ENCODE measurements at regions of chr15 and their contacts with region 1.

Region 1: GRCh38 chr15:93982226-93982727 is 249.1 kb upstream of the MCTP2 start:
- DNase-seq: peak; percentile 14 to 60
- ATAC-seq: peak; percentile 69 to 80
- H3K4me3 ChIP-seq: no peak overlapping the region
- H3K27ac ChIP-seq: peak overlapping the region; percentile 52 to 73 (median 54)
- H3K4me1 ChIP-seq: peaks cover 6 to 11% of the 10 kb centered on the region in 2 donors
- H3K27me3 ChIP-seq: no peaks in the 10 kb centered on the region
- CTCF ChIP-seq: no peak
- POLR2A ChIP-seq: no peak

Region 2: GRCh38 chr15:93823971-93824913 is 158.0 kb before region 1 on chr15:
- in situ Hi-C with region 1: no loop called
- intact Hi-C with region 1: no loop called
- DNase-seq: peak in 1 of 2 donors; percentile 17
- ATAC-seq: no peak
- H3K4me3 ChIP-seq: no peak overlapping the region
- H3K27ac ChIP-seq: no peak overlapping the region
- H3K4me1 ChIP-seq: no peaks in the 10 kb centered on the region
- H3K27me3 ChIP-seq: no peaks in the 10 kb centered on the region
- CTCF ChIP-seq: no peak
- POLR2A ChIP-seq: no peak

Region 3: DNA sequence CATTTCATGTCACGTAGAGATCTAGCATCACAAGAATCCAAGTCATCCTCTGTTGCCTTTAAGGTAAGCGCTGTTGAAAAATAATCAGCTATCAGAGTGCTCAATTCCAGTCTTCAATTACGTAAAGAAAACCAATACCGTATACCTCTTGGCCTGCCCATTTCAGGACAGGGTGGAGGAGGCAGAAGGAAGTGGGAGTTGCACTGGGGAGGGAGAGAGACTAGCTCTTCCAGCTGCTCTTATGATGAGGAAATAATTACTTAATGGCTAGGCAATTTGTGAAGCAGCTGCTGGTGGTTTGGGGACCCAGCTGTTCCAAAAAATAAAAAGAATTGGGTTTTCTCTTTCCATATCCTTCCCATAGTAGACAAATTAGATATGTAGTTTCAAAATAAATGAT is 116.7 kb before region 1 on chr15:
- in situ Hi-C with region 1: no loop called
- intact Hi-C with region 1: no loop called
- DNase-seq: peak in 1 of 2 donors; percentile 16
- ATAC-seq: peak; percentile 56 to 74
- H3K4me3 ChIP-seq: no peak overlapping the region
- H3K27ac ChIP-seq: peak overlapping the region in 3 of 4 donors; percentile 22 to 44 (median 39)
- H3K4me1 ChIP-seq: no peaks in the 10 kb centered on the region
- H3K27me3 ChIP-seq: no peaks in the 10 kb centered on the region
- CTCF ChIP-seq: no peak
- POLR2A ChIP-seq: no peak

Region 4: DNA sequence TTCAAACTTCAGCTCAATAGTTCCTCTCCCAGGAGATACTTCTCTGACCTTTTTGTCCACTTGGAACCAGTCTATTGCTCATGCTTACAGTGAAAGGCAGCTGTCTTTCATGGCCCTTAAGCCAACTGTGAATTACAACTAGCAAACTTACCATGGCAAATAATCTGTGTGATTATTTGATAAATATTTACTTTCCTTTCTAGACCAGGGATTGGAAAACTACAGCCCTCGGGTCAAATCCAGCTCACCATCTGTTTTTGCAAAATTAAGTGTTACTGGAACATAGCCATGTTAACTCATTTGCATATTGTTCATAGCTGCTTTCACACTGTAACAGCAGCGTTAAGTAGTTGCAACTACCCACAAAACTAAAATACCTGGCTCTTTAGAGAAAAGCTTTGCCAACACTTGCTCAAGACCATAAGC is 40.0 kb before region 1 on chr15:
- in situ Hi-C with region 1: no loop called
- intact Hi-C with region 1: loop called (anchors 5 kb)
- DNase-seq: no peak
- ATAC-seq: peak; percentile 52 to 53
- H3K4me3 ChIP-seq: no peak overlapping the region
- H3K27ac ChIP-seq: peak overlapping the region; percentile 6 to 50 (median 30)
- H3K4me1 ChIP-seq: peaks cover 0 to 8% of the 10 kb centered on the region in 2 donors
- H3K27me3 ChIP-seq: no peaks in the 10 kb centered on the region
- CTCF ChIP-seq: no peak
- POLR2A ChIP-seq: no peak